Activated CD4-positive, alpha-beta memory T cell treated with anti-CD3 and anti-CD28 coated beads for 36 hours (primary cell): ENCODE measurements at regions of chr11 and their contacts with region 1.

Region 1: DNA sequence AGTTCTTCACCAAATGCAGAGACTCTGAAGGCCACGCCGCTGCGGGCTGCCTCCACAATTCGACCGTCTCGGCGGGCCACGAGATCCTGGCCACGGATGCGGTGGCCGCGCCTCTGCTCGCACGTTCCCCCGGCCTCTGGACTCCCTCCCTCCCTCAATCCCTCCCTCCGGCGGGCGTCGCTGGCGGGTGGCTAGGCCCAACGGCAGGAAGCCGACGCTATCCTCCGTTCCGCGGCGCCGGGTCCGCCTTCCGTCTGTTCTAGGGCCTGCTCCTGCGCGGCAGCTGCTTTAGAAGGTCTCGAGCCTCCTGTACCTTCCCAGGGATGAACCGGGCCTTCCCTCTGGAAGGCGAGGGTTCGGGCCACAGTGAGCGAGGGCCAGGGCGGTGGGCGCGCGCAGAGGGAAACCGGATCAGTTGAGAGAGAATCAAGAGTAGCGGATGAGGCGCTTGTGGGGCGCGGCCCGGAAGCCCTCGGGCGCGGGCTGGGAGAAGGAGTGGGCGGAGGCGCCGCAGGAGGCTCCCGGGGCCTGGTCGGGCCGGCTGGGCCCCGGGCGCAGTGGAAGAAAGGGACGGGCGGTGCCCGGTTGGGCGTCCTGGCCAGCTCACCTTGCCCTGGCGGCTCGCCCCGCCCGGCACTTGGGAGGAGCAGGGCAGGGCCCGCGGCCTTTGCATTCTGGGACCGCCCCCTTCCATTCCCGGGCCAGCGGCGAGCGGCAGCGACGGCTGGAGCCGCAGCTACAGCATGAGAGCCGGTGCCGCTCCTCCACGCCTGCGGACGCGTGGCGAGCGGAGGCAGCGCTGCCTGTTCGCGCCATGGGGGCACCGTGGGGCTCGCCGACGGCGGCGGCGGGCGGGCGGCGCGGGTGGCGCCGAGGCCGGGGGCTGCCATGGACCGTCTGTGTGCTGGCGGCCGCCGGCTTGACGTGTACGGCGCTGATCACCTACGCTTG is at the start of gene FUT4:
- DNase-seq: peak; percentile 83
- H3K4me3 Mint-ChIP-seq: peak within 1 kb of the TSS; percentile 99
- H3K27ac Mint-ChIP-seq: peak within 1 kb of the TSS; percentile 98
- H3K4me1 Mint-ChIP-seq: peaks cover 35% of the 10 kb centered on the region
- H3K27me3 Mint-ChIP-seq: peaks cover 2% of the 10 kb centered on the region
- total RNA-seq, gene FUT4: 3.6 to 3.9 TPM

Region 2: GRCh38 chr11:94449437-94449836 is 94.5 kb before region 1 on chr11:
- CTCF ChIA-PET with region 1: no interaction called
- POLR2A ChIA-PET with region 1: no interaction called
- intact Hi-C with region 1: no loop called
- DNase-seq: no peak
- H3K4me3 Mint-ChIP-seq: no peak overlapping the region
- H3K27ac Mint-ChIP-seq: no peak overlapping the region
- H3K4me1 Mint-ChIP-seq: no peaks in the 10 kb centered on the region
- H3K27me3 Mint-ChIP-seq: no peaks in the 10 kb centered on the region

Region 3: DNA sequence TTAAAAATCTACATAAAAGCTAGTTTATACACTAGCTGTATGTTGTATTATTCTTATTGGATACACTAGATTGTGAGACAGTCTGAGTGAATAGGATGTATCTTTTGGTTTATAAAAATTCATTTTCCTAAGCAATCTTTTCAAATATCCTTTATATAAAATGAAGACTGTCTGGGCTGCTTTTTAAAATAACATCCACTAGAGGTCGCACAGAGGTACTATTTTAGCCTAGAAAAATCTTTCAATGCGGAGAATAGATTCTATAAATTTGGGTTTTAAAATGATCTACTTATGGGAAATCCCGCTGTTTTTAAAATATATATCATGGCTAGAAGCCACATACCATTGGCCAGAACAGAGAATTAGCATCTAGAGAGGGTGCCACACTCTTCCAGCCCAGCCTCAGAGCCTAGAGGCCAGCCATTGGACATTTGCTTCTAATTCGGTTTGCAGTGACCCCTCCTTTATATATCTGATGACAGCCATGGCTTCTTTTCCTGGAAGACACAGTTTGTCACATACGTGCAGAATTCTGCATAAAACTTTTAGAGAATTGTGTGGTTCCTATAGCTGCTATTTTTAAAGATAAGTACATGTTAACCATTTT is 24.4 kb before region 1 on chr11:
- CTCF ChIA-PET with region 1: interaction called, 4 read pairs
- POLR2A ChIA-PET with region 1: no interaction called
- intact Hi-C with region 1: loop called (anchors 1 kb)
- DNase-seq: no peak
- H3K4me3 Mint-ChIP-seq: no peak overlapping the region
- H3K27ac Mint-ChIP-seq: no peak overlapping the region
- H3K4me1 Mint-ChIP-seq: no peaks in the 10 kb centered on the region
- H3K27me3 Mint-ChIP-seq: peaks cover 15% of the 10 kb centered on the region

Region 4: DNA sequence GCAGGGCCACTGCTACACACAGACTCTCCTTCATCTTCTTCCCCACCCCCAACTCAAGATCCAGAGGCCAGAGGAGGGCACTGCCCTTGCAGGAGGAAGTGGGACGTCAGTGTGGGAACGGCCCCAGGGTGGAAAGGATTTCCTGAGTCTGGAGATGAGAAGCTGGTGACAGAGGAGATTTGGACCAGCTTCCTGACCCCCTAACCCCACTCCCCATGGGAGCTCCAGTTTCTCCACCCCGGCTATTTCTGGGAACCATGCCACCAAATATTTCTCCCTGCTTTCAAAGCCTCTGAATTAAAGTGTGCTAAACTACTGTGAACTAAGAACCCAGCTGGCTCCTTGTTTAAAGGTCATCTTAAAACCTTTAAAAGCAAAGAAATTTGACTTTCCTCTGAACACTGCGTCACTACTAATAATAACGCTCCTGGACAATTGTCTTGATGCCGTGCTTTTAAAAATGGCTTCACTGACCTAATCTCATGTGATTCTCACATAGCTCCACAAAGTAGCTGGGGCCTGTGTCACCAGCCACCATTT is 382.8 kb after region 1 on chr11:
- CTCF ChIA-PET with region 1: no interaction called
- POLR2A ChIA-PET with region 1: no interaction called
- intact Hi-C with region 1: loop called (anchors 10 kb)
- DNase-seq: no peak
- H3K4me3 Mint-ChIP-seq: no peak overlapping the region
- H3K27ac Mint-ChIP-seq: no peak overlapping the region
- H3K4me1 Mint-ChIP-seq: peaks cover 27% of the 10 kb centered on the region
- H3K27me3 Mint-ChIP-seq: no peaks in the 10 kb centered on the region

Region 5: DNA sequence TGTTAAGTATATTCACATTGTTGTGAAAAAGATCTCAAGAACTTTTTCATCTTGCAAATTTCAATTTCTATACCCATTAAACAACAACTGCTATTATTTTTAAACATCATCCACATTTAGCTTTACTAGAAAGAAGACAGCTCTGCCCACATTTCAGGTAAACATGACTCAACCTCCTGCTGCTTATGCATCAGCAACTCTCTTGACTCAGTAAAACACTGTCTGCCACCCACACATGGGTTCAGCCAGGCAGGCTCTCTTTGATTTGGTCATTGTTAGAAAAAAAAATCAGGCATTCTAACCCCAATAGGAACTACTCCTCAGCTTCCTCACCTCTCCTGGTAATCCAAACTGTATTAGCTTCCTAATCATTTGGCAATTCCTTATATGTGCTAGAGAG is 540.5 kb after region 1 on chr11:
- CTCF ChIA-PET with region 1: no interaction called
- POLR2A ChIA-PET with region 1: no interaction called
- intact Hi-C with region 1: loop called (anchors 5 kb)
- DNase-seq: peak; percentile 79
- H3K4me3 Mint-ChIP-seq: no peak overlapping the region
- H3K27ac Mint-ChIP-seq: peak overlapping the region; percentile 77
- H3K4me1 Mint-ChIP-seq: peaks cover 45% of the 10 kb centered on the region
- H3K27me3 Mint-ChIP-seq: no peaks in the 10 kb centered on the region